GM10248 (cell line): ENCODE measurements at regions of chr17 and their contacts with region 1.

Region 1: DNA sequence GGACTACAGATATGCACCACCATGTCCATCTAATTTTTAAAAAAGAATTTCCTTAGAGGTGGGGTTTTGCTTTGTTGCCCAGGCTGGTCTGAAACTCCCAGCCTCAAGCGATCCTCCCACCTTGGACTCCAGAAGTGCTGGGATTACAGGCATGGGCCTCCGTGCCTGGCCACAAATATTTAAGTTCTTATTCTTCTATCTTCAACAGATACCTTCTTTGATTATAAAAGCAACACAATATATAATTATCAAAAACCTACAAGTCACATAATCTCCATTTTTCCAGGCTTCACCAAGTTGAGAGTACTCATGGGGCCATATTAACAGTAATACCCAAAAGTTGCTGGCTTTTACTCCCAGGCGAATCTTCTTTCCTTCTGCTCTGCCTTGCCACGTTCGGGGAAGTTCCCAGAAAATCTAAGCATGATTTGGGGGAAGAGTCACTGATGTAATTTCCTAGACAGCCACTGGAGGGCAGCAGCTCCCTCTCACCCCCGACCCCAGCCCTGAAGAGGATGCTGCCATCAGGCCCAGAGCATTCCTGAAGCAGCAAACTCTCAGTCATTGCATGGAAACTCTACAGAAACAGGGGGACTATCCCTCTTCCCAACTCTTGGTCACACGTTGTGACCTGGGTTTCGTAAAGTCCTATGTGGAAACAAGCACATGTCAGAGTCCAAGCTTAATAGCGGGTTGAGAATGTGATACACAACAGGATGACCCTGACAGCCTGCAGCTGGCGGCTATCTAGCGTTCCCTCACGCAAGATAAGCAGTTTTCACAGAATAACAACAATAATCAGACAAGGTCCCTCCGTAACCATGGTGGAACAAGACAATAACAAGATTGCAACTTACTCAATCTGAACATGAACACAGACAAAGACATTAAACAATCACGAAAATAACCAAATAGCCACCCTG is 43.9 kb upstream of the DHX40 start:
- DNase-seq: peak; percentile 80
- CTCF ChIP-seq: peak; percentile 87

Region 2: DNA sequence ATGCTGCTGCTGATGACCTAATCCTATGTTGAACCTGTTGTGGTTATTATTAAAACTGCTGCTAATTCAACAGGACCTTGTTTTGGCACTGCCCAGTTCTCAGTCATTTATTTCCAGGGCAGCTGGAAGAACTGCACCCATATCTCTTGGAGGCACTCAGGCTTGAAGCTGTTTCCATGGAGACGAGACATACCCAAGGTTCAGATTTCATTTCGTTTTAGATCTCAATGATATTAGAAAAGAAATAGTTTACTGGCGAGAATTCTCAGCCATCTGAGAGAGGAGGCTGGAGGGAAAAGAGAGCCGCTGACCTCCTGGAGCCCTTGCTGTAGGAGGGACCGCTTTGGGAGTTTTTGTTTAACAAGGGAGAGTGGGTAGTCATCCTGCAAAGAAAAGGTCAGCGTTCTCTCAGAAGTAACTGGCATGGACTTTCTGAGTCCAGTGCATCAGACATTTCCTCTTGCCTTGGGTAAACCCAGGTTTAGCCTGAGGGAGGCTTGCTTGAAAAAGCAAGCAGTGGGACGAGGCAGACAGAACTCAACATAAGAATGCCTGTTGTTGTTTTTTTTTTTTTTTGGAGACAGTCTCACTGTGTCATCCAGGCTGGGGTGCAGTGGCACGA is 114.5 kb before region 1 on chr17:
- CTCF ChIA-PET with region 1: no interaction called
- POLR2A ChIA-PET with region 1: no interaction called
- DNase-seq: no peak
- CTCF ChIP-seq: no peak

Region 3: GRCh38 chr17:59506894-59507726 is 14.4 kb before region 1 on chr17:
- CTCF ChIA-PET with region 1: interaction called, 11 read pairs
- POLR2A ChIA-PET with region 1: no interaction called
- DNase-seq: no peak
- CTCF ChIP-seq: no peak

Region 4: DNA sequence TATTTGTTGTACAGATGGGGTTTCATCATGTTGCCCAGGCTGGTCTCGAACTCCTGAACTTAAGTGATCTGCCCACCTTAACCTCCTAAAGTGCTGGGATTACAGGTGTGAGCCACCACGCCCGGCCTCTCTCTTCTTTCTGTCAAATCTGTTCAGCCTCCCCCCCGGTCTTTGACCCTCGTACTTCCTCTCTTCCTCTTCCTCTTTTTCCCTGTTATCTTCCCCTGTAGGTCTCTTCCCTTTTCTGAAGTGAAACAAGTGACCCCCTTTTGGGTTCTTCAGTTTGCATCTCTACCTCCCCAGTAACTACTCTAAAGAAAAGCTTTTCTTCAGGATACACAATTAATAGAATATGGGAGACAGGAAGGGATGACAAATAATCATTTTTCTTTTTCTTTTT is 12.3 kb after region 1 on chr17:
- CTCF ChIA-PET with region 1: interaction called, 38 read pairs
- POLR2A ChIA-PET with region 1: no interaction called
- DNase-seq: no peak
- CTCF ChIP-seq: no peak

Region 5: GRCh38 chr17:59638553-59638952 is 117.1 kb after region 1 on chr17:
- CTCF ChIA-PET with region 1: no interaction called
- POLR2A ChIA-PET with region 1: no interaction called
- DNase-seq: no peak
- CTCF ChIP-seq: no peak

Region 6: GRCh38 chr17:59941131-59941530 is 419.7 kb after region 1 on chr17:
- CTCF ChIA-PET with region 1: no interaction called
- POLR2A ChIA-PET with region 1: no interaction called
- DNase-seq: no peak
- CTCF ChIP-seq: no peak